ENCODE measurements at regions of chr11 and their contacts with region 1.

Region 1: GRCh38 chr11:82855616-82856015 is 44.6 kb downstream of the PRCP start:
- DNase-seq: no peak
- H3K4me3 ChIP-seq: no peak overlapping the region
- H3K4me3 Mint-ChIP-seq: no peak overlapping the region
- H3K27ac Mint-ChIP-seq: no peak overlapping the region
- H3K4me1 ChIP-seq: peaks cover 10% of the 10 kb centered on the region
- H3K4me1 Mint-ChIP-seq: peaks cover 5% of the 10 kb centered on the region
- H3K27me3 ChIP-seq: no peaks in the 10 kb centered on the region
- H3K27me3 Mint-ChIP-seq: no peaks in the 10 kb centered on the region
- CTCF ChIP-seq: no peak

Region 2: DNA sequence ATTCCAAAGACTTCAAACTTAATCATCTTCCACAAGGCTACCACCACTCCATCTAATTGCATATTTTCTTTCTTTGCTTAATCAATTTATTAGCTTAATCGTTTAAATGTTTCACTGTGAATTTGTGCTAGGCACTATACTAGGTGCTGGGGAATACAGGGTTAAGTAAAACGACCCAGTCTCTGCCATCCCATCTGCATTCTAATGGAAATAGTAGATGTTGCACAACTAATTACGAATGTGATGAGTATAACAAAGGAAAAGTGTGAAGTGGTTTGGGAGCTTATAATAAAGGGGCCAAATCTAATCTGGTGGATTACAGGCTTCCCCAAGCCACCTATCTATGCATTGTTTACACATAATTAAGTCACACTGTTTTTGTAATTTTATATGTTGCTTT is 269.0 kb before region 1 on chr11:
- CTCF ChIA-PET with region 1: no interaction called
- POLR2A ChIA-PET with region 1: no interaction called
- intact Hi-C with region 1: no loop called
- DNase-seq: no peak
- H3K4me3 ChIP-seq: no peak overlapping the region
- H3K4me3 Mint-ChIP-seq: no peak overlapping the region
- H3K27ac Mint-ChIP-seq: no peak overlapping the region
- H3K4me1 ChIP-seq: no peaks in the 10 kb centered on the region
- H3K4me1 Mint-ChIP-seq: no peaks in the 10 kb centered on the region
- H3K27me3 ChIP-seq: no peaks in the 10 kb centered on the region; the same call in 1 of the 2 replicates
- H3K27me3 Mint-ChIP-seq: peaks cover 2% of the 10 kb centered on the region
- CTCF ChIP-seq: no peak

Region 3: GRCh38 chr11:82832983-82833382 is 22.6 kb before region 1 on chr11:
- CTCF ChIA-PET with region 1: no interaction called
- POLR2A ChIA-PET with region 1: no interaction called
- intact Hi-C with region 1: loop called (anchors 2 kb)
- DNase-seq: no peak
- H3K4me3 ChIP-seq: no peak overlapping the region
- H3K4me3 Mint-ChIP-seq: no peak overlapping the region
- H3K27ac Mint-ChIP-seq: no peak overlapping the region
- H3K4me1 ChIP-seq: no peaks in the 10 kb centered on the region
- H3K4me1 Mint-ChIP-seq: no peaks in the 10 kb centered on the region
- H3K27me3 ChIP-seq: no peaks in the 10 kb centered on the region
- H3K27me3 Mint-ChIP-seq: no peaks in the 10 kb centered on the region
- CTCF ChIP-seq: no peak

Region 4: GRCh38 chr11:83612891-83613766 is 757.5 kb after region 1 on chr11:
- CTCF ChIA-PET with region 1: no interaction called
- POLR2A ChIA-PET with region 1: no interaction called
- intact Hi-C with region 1: no loop called
- DNase-seq: peak in 1 of 2 experiments; percentile 12
- H3K4me3 ChIP-seq: no peak overlapping the region
- H3K4me3 Mint-ChIP-seq: no peak overlapping the region
- H3K27ac Mint-ChIP-seq: no peak overlapping the region
- H3K4me1 ChIP-seq: no peaks in the 10 kb centered on the region
- H3K4me1 Mint-ChIP-seq: peaks cover 10% of the 10 kb centered on the region
- H3K27me3 ChIP-seq: no peaks in the 10 kb centered on the region
- H3K27me3 Mint-ChIP-seq: no peaks in the 10 kb centered on the region
- CTCF ChIP-seq: no peak

Measured in Caco-2 (cell line).